ENCODE measurements at regions of chr6 and their contacts with region 1.

Region 1: GRCh38 chr6:63527658-63528514 is 44.4 kb upstream of the LOC128125822 start:
- DNase-seq: peak; percentile 87
- ATAC-seq: no peak
- H3K4me3 ChIP-seq: no peak overlapping the region
- H3K27ac ChIP-seq: no peak overlapping the region
- H3K4me1 ChIP-seq: no peaks in the 10 kb centered on the region
- H3K27me3 ChIP-seq: no peaks in the 10 kb centered on the region
- CTCF ChIP-seq: no peak; the same call in 1 of the 2 replicates

Region 2: DNA sequence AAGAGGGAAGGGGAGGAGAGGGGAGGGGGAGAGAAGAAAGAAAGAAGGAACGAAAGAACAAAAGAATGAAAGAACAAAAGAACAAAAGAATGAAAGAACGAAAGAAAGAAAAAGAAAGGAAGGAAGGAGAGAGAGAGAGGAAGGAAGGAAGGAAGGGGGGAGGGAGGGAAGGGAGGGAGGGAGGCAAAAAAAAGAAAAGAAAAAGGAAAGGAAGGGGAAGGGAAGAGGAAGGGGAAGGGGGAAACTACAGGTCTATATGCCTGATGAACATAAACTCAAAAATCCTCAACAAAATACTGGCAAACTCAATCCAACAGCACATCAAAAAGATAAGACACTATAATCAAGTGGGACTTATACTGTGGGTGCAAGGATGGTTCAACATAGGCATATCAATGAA is 194.4 kb before region 1 on chr6:
- CTCF ChIA-PET with region 1: no interaction called
- POLR2A ChIA-PET with region 1: no interaction called
- in situ Hi-C with region 1: no loop called
- intact Hi-C with region 1: no loop called
- DNase-seq: no peak
- ATAC-seq: no peak
- H3K4me3 ChIP-seq: no peak overlapping the region
- H3K27ac ChIP-seq: no peak overlapping the region
- H3K4me1 ChIP-seq: no peaks in the 10 kb centered on the region
- H3K27me3 ChIP-seq: no peaks in the 10 kb centered on the region
- CTCF ChIP-seq: no peak

Region 3: GRCh38 chr6:63426844-63427243 is 101.0 kb before region 1 on chr6:
- CTCF ChIA-PET with region 1: no interaction called
- POLR2A ChIA-PET with region 1: no interaction called
- in situ Hi-C with region 1: no loop called
- intact Hi-C with region 1: no loop called
- DNase-seq: no peak
- ATAC-seq: no peak
- H3K4me3 ChIP-seq: no peak overlapping the region
- H3K27ac ChIP-seq: no peak overlapping the region
- H3K4me1 ChIP-seq: no peaks in the 10 kb centered on the region
- H3K27me3 ChIP-seq: no peaks in the 10 kb centered on the region
- CTCF ChIP-seq: no peak

Region 4: GRCh38 chr6:63510353-63510686 is 17.6 kb before region 1 on chr6:
- CTCF ChIA-PET with region 1: no interaction called
- POLR2A ChIA-PET with region 1: interaction called, 11 read pairs
- in situ Hi-C with region 1: no loop called
- intact Hi-C with region 1: no loop called
- DNase-seq: no peak
- ATAC-seq: no peak
- H3K4me3 ChIP-seq: no peak overlapping the region
- H3K27ac ChIP-seq: no peak overlapping the region
- H3K4me1 ChIP-seq: no peaks in the 10 kb centered on the region
- H3K27me3 ChIP-seq: no peaks in the 10 kb centered on the region
- CTCF ChIP-seq: no peak

Region 5: GRCh38 chr6:63571881-63572732 is 44.2 kb after region 1 on chr6 and contains the starts of genes LOC128125822 and PTP4A1:
- CTCF ChIA-PET with region 1: no interaction called
- POLR2A ChIA-PET with region 1: no interaction called
- in situ Hi-C with region 1: loop called (anchors 5 kb)
- intact Hi-C with region 1: no loop called
- DNase-seq: peak; percentile 85
- ATAC-seq: peak; percentile 97
- H3K4me3 ChIP-seq: peak within 1 kb of the TSS; percentile 82 to 85
- H3K27ac ChIP-seq: peak within 1 kb of the TSS; percentile 98
- H3K4me1 ChIP-seq: peaks cover 22% of the 10 kb centered on the region
- H3K27me3 ChIP-seq: no peaks in the 10 kb centered on the region; the same call in 1 of the 2 replicates
- CTCF ChIP-seq: no peak
- total RNA-seq, gene PTP4A1: 71.0 TPM

Measured in Panc1 (cell line).